GM12878 (cell line): ENCODE measurements at regions of chr10 and their contacts with region 1.

Region 1: DNA sequence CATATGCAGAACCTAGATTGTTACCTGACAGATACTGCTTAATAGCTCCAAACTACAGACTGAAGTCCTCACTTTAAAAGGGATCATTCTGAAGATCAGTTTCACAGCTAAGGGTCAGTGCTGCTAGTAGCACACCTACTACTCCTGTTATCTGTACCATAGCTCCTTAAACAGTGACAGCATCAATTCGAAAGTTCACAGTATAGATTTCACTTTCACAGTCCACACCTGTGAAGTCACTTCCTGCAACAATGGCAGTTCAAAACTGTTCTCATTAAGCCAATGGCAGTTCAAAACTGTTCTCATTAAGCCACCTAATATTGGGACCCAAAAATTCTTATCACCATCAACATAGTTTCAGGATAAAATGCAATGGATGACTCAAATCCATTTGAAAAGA is 10.7 kb upstream of the FHIP2A start:
- DNase-seq: no peak
- ATAC-seq: peak; percentile 100
- H3K4me3 ChIP-seq: no peak overlapping the region
- H3K27ac ChIP-seq: peak overlapping the region; percentile 15; the same call in 1 of the 2 replicates
- H3K4me1 ChIP-seq: peaks cover 8% of the 10 kb centered on the region
- H3K27me3 ChIP-seq: no peaks in the 10 kb centered on the region
- CTCF ChIP-seq: no peak
- EP300 ChIP-seq: peak in 1 of 2 experiments; percentile 23; a peak in 1 of 4 replicates
- POLR2A ChIP-seq: no peak
- RAD21 ChIP-seq: no peak

Region 2: DNA sequence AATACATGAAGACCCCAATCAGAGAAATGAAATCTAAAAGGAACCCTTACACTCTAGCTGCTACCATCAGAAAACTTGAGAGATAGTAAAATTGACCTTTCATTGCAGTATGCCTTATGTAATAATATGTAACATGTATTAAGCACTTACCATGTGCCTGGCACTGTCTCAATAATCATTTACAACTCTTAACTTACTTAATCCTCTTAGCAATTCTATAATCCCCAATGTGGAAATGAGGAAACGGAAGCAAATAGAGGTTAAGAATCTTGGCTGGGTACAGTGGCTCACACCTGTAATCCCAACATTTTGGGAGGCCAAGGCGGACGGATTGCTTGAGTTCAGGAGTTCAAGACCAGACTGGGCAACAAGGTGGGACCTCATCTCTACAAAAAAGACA is 19.2 kb before region 1 on chr10:
- CTCF ChIA-PET with region 1: no interaction called
- POLR2A ChIA-PET with region 1: no interaction called
- RAD21 ChIA-PET with region 1: no interaction called
- SMC1A ChIA-PET with region 1: no interaction called
- in situ Hi-C with region 1: no loop called
- intact Hi-C with region 1: no loop called
- DNase-seq: no peak
- ATAC-seq: no peak
- H3K4me3 ChIP-seq: no peak overlapping the region
- H3K27ac ChIP-seq: no peak overlapping the region
- H3K4me1 ChIP-seq: no peaks in the 10 kb centered on the region
- H3K27me3 ChIP-seq: no peaks in the 10 kb centered on the region; a peak in 1 of 4 replicates
- CTCF ChIP-seq: no peak
- EP300 ChIP-seq: no peak
- POLR2A ChIP-seq: no peak
- RAD21 ChIP-seq: no peak

Region 3: DNA sequence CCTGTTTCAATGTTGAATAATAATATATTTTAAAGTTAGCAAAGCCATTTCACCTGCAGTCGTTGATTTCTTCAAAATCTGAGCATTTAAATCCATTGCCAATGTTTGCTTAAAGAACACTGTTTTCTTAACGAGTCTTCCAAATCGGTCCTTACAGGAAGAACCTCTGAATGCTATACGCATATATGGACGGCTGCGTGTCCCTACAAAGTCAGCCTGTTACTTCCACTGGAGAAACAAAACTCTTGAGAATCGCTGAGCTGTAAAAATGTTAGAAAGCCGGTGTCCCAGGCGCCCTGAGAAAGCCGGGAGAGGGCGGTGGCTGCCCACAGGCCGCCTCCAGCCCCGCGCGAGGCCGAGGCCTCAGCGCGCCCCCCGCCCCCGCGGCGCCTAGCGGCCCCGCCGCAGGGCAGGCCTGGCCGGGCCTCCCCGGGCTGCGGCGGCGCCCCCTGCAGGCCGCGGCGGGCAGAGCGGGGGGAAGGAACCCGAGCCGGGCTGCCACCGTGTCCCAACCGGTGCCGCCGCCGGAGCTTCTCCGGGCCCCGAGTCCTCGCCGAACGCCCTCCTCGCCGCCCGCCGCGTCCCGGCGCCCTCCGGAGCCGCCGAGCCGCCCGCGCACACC is 10.5 kb after region 1 on chr10 and contains the start of gene FHIP2A:
- CTCF ChIA-PET with region 1: interaction called, 13 read pairs
- POLR2A ChIA-PET with region 1: interaction called, 5 read pairs
- RAD21 ChIA-PET with region 1: interaction called, 10 read pairs
- SMC1A ChIA-PET with region 1: interaction called, 3 read pairs
- in situ Hi-C with region 1: no loop called
- intact Hi-C with region 1: no loop called
- DNase-seq: no peak
- ATAC-seq: peak; percentile 84
- H3K4me3 ChIP-seq: peak within 1 kb of the TSS; percentile 75
- H3K27ac ChIP-seq: peak within 1 kb of the TSS; percentile 80
- H3K4me1 ChIP-seq: peaks cover 16% of the 10 kb centered on the region
- H3K27me3 ChIP-seq: no peaks in the 10 kb centered on the region
- CTCF ChIP-seq: peak; percentile 30 to 59 (median 51); a peak in 3 of 6 replicates
- EP300 ChIP-seq: no peak
- POLR2A ChIP-seq: peak; percentile 73
- RAD21 ChIP-seq: peak; percentile 58
- polyA plus RNA-seq, gene FHIP2A: 6.8 to 9.2 TPM

Region 4: DNA sequence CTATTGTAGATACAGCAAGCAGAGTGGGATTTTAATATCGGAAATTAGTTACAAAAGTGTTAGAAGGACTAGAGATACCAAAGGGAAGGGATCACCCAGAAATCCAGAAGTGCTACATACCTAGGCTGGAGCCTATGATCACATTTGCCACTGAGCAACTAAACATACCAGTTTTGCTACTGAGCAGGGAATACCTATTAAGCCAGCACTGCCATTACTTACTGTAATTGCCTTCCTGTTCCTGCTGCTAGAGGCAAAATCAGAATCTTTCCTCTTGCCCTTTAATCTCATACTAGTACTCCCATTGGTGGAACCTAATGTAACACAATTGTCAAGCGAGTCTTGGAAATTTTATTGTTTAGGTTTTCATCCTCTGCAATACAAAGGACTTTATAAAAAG is 403.9 kb after region 1 on chr10:
- CTCF ChIA-PET with region 1: no interaction called
- POLR2A ChIA-PET with region 1: no interaction called
- RAD21 ChIA-PET with region 1: no interaction called
- SMC1A ChIA-PET with region 1: no interaction called
- in situ Hi-C with region 1: no loop called
- intact Hi-C with region 1: no loop called
- DNase-seq: no peak
- ATAC-seq: no peak
- H3K4me3 ChIP-seq: no peak overlapping the region
- H3K27ac ChIP-seq: no peak overlapping the region
- H3K4me1 ChIP-seq: no peaks in the 10 kb centered on the region
- H3K27me3 ChIP-seq: no peaks in the 10 kb centered on the region
- CTCF ChIP-seq: no peak
- EP300 ChIP-seq: no peak
- POLR2A ChIP-seq: no peak
- RAD21 ChIP-seq: no peak